Adrenal gland (tissue), 19 donors: ENCODE measurements at regions of chr9 and their contacts with region 1.

Region 1: GRCh38 chr9:15220658-15221318 is 86.2 kb downstream of the TTC39B start:
- DNase-seq: no peak
- H3K4me3 ChIP-seq: no peak overlapping the region
- H3K27ac ChIP-seq: no peak overlapping the region
- H3K4me1 ChIP-seq: peaks cover 0 to 6% of the 10 kb centered on the region in 2 donors
- H3K27me3 ChIP-seq: no peaks in the 10 kb centered on the region
- CTCF ChIP-seq: no peak
- POLR2A ChIP-seq: no peak

Region 2: DNA sequence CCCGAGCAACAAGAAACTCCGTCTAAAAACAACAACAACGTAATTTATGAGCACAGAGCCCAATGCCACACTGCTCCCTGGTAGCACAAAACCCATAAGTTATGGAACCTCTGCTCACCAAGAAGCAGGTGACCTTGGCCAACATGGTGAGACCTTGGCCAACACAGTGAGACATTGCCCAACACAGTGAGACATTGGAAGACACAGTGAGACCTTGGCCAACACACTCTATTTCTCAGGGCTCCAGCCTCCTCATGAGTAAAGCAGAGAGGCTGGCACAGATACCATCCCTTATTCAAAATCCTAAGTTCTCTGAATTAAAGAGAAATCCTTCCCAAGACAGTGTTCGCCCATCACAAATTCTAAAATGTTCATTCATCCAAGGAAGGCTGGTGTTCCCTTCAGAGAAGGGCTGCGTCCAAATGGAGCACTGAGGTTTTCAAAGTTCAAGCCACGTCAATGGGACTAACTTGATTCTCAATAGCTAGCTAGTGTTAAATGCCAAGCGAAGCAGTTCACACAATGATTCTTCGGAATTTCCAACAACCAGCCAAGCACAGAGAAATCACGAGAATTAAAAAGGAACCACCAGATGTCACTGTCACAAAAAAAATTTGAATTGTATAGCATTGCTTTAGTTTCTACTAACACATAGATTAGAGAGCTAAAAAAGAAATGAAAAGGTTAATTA is 56.8 kb after region 1 on chr9:
- intact Hi-C with region 1: loop called in 1 of 2 experiments (anchors 10 kb)
- DNase-seq: peak in 6 of 7 donors; percentile 29 to 64 (median 51)
- H3K4me3 ChIP-seq: no peak overlapping the region
- H3K27ac ChIP-seq: peak overlapping the region in 1 of 5 donors; percentile 2
- H3K4me1 ChIP-seq: peaks cover 5 to 6% of the 10 kb centered on the region in 2 donors
- H3K27me3 ChIP-seq: no peaks in the 10 kb centered on the region
- CTCF ChIP-seq: peak in 5 of 6 experiments; percentile 15 to 58 (median 47)
- POLR2A ChIP-seq: no peak